ENCODE measurements at regions of chr6 and their contacts with region 1.

Region 1: DNA sequence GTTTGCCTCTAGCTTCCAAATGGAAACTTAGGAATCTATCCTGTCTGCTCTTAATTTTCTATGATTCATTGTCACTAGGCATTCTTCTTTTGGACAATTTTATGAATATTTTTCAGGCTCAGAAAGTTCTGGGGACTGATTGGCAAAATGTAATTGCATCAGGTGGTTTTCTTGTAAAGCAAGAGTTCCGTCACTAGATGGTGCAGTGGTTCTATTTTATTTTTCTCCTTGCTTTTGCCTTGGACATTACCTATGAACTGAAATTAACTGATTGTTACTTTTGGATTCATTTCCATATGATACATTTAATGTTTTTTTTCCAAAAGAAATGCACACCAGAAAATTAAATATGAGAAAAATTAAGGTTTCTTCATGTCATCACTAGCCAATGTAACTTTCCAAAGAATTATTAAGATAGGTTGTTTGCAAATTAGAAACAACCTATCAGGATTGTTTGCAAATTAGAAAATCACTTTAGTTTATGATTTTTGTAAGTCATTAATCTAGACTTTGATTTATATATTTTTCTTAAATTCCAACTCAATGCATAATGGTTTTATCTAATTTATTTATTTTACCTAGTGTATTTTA is 48.0 kb downstream of the TMEM170B start:
- DNase-seq: peak in 2 of 9 experiments; percentile 19 to 27
- ATAC-seq: no peak
- H3K4me3 ChIP-seq: no peak overlapping the region
- H3K4me3 Mint-ChIP-seq: no peak overlapping the region
- H3K27ac ChIP-seq: no peak overlapping the region
- H3K27ac Mint-ChIP-seq: no peak overlapping the region
- H3K4me1 ChIP-seq: no peaks in the 10 kb centered on the region
- H3K4me1 Mint-ChIP-seq: no peaks in the 10 kb centered on the region
- H3K27me3 ChIP-seq: no peaks in the 10 kb centered on the region
- H3K27me3 Mint-ChIP-seq: peaks cover 12% of the 10 kb centered on the region
- CTCF ChIP-seq: peak; percentile 22

Region 2: GRCh38 chr6:11575408-11576033 is 10.0 kb before region 1 on chr6:
- CTCF ChIA-PET with region 1: interaction called, 17 read pairs
- POLR2A ChIA-PET with region 1: no interaction called
- intact Hi-C with region 1: no loop called
- DNase-seq: peak in 8 of 9 experiments; percentile 5 to 67 (median 42)
- ATAC-seq: peak; percentile 88
- H3K4me3 ChIP-seq: no peak overlapping the region
- H3K4me3 Mint-ChIP-seq: no peak overlapping the region
- H3K27ac ChIP-seq: no peak overlapping the region
- H3K27ac Mint-ChIP-seq: no peak overlapping the region
- H3K4me1 ChIP-seq: no peaks in the 10 kb centered on the region
- H3K4me1 Mint-ChIP-seq: no peaks in the 10 kb centered on the region
- H3K27me3 ChIP-seq: no peaks in the 10 kb centered on the region
- H3K27me3 Mint-ChIP-seq: no peaks in the 10 kb centered on the region
- CTCF ChIP-seq: peak; percentile 85

Region 3: DNA sequence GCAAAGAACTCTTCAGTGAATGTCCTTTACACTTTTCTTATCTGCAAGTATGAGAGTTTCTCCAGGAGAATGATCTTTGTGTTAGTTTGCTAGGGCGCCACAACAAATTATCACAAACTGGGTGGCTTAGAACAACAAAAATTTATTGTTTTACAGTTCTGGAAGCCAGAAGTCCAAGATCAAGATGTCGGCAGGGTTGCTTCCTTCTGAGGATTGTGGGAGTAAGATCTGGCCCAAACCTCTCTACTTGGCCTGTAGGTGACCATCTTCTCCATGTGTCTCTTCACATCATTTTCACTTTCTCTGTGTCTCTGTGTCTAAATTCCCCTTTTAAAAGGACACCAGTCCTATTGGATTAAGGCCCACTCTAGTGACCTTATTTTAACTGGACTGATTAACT is 90.1 kb after region 1 on chr6:
- CTCF ChIA-PET with region 1: no interaction called
- POLR2A ChIA-PET with region 1: no interaction called
- intact Hi-C with region 1: no loop called
- DNase-seq: peak in 2 of 9 experiments; percentile 6 to 22
- ATAC-seq: no peak
- H3K4me3 ChIP-seq: no peak overlapping the region
- H3K4me3 Mint-ChIP-seq: no peak overlapping the region
- H3K27ac ChIP-seq: no peak overlapping the region
- H3K27ac Mint-ChIP-seq: no peak overlapping the region
- H3K4me1 ChIP-seq: no peaks in the 10 kb centered on the region
- H3K4me1 Mint-ChIP-seq: no peaks in the 10 kb centered on the region
- H3K27me3 ChIP-seq: no peaks in the 10 kb centered on the region
- H3K27me3 Mint-ChIP-seq: no peaks in the 10 kb centered on the region
- CTCF ChIP-seq: no peak

Region 4: DNA sequence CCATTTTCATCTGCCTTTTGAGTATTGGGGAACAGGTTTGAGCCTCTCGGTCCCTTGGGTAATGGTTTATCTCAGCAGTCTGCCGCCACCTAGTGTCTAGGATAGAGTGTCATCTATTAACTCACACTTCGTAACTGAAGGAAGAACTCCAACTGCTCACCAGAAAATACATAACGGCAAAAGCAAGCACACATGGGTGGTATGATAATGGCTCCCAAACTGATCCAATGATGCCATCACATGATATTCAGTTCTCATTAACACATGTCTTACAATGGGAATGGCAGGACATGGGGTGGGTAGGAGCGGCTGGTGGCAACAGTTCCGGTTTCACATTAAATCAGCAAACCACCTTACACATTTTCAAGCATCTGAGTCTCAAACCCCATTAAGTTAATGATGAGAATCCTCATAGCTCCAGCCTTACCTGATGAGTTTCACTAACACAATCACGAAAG is 1020.4 kb after region 1 on chr6:
- CTCF ChIA-PET with region 1: interaction called, 9 read pairs
- POLR2A ChIA-PET with region 1: no interaction called
- intact Hi-C with region 1: loop called in 1 of 2 experiments (anchors 1 kb)
- DNase-seq: peak in 5 of 9 experiments; percentile 4 to 55 (median 22)
- ATAC-seq: no peak
- H3K4me3 ChIP-seq: no peak overlapping the region
- H3K4me3 Mint-ChIP-seq: no peak overlapping the region
- H3K27ac ChIP-seq: no peak overlapping the region
- H3K27ac Mint-ChIP-seq: no peak overlapping the region
- H3K4me1 ChIP-seq: no peaks in the 10 kb centered on the region
- H3K4me1 Mint-ChIP-seq: no peaks in the 10 kb centered on the region
- H3K27me3 ChIP-seq: no peaks in the 10 kb centered on the region
- H3K27me3 Mint-ChIP-seq: peaks cover 13% of the 10 kb centered on the region
- CTCF ChIP-seq: no peak

Region 5: GRCh38 chr6:12890171-12890790 is 1304.8 kb after region 1 on chr6:
- CTCF ChIA-PET with region 1: no interaction called
- POLR2A ChIA-PET with region 1: no interaction called
- intact Hi-C with region 1: loop called in 1 of 2 experiments (anchors 5 kb)
- DNase-seq: peak in 2 of 9 experiments; percentile 12 to 14
- ATAC-seq: no peak
- H3K4me3 ChIP-seq: no peak overlapping the region
- H3K4me3 Mint-ChIP-seq: no peak overlapping the region
- H3K27ac ChIP-seq: no peak overlapping the region
- H3K27ac Mint-ChIP-seq: no peak overlapping the region
- H3K4me1 ChIP-seq: no peaks in the 10 kb centered on the region
- H3K4me1 Mint-ChIP-seq: peaks cover 3% of the 10 kb centered on the region
- H3K27me3 ChIP-seq: no peaks in the 10 kb centered on the region
- H3K27me3 Mint-ChIP-seq: peaks cover 11% of the 10 kb centered on the region
- CTCF ChIP-seq: peak; percentile 14

Measured in CD8-positive, alpha-beta T cell (primary cell).